Posterior vena cava (tissue), 2 donors: ENCODE measurements at regions of chr15 and their contacts with region 1.

Region 1: DNA sequence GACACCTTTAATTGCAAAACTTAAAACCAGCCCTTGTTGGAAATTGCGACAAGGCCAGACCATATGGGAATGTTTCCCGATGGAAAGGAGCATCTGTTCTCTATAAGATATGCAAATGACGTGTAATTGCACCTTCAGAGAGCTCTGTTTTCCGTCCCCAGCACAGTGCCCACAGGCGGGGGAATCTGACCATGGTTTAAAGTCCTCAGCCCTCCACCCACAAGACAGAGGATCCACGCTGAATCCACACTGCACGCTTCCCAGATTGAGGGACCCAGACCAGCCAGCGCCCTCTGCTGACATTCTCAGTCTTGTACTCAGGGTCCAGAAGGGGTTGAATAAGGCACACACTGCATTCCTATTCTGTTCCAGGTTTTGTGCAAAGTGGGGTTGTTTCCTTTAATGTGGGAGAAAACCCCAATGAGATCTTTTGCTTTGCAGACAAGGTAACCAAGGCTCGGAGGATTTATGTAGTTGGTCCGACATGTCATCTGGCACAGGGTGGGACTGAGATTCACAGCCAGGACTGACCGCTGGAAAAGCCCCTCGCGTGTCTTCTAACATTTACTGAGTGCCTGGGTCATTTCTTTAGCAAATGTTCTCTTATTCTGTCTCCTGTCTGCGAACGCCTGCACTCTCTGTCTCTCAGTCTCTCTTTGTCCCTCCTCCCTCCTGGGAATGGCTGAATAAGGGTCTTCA is 36.8 kb upstream of the KLHL25 start:
- DNase-seq: peak; percentile 87

Region 2: GRCh38 chr15:84924074-84924731 is 907.4 kb before region 1 on chr15:
- intact Hi-C with region 1: no loop called
- DNase-seq: no peak

Region 3: GRCh38 chr15:85296615-85297402 is 534.8 kb before region 1 on chr15:
- intact Hi-C with region 1: loop called in 1 of 2 experiments (anchors 10 kb)
- DNase-seq: no peak

Region 4: DNA sequence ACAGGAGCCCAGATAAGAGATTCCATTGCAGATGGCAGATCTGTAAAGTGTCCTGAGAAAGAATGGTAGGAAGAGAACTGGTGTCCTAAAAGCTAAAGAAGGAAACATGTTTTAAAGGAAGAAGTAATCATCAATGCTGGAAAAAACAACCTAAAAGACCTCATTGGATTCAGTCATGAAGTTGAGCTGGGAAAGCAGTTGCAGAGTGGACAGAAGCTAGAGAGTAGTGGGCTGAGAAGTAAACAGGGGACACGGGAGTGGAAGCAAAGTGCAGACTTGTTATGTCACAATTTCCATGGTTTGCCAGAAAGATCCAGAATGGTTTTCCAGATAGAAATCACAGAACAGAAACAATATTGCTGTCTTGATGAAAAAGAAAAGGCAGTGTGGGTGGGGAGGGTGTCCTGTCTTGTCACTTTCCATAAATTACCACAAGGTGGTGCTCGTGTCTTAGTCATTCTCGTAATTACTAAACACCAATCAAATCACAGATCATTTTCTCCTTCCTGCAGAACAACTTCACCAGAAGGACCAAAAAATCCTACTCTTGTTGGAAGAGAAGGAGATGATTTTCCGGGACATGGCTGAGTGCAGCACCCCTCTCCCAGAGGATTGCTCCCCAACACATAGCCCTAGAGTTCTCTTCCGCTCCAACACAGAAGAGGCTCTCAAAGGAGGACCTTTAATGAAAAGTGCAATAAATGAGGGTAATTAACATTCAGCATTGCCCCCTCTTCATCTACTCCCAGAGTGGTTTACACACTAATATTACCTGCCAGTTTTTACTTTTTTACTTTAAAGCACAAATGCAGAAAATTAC is 101.4 kb before region 1 on chr15:
- intact Hi-C with region 1: loop called in 1 of 2 experiments (anchors 2 kb)
- DNase-seq: no peak

Region 5: DNA sequence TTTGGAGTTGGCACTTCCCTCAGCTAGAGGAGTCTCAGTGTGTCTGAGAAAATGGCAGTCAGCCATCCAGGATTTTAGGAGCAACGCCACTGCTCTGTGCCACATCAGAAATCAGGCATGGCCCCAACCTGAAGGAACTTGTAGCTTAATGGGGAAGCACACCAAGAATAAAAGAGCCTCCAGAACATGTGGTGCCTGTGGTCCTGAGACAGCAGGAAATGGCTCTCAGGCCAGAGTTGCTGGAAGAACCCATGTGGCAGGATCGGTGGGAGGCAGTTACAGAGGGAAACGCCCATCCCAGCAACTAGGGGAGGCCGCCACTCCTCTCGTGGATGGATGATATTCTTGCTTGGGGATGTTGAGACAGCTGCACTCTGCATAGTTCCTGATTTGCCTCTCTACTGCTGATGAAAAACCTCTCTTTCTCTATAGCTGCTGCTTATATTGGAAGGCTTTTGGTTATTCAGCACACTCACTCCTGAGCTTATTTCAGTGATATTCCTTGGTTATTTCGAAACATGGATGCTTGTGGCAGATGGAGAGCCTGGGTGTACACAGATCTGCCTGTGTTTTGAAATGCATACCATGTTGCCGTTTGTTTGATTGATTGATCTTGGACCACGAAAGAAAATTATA is 89.3 kb before region 1 on chr15:
- intact Hi-C with region 1: loop called (anchors 5 kb)
- DNase-seq: peak; percentile 58

Region 6: DNA sequence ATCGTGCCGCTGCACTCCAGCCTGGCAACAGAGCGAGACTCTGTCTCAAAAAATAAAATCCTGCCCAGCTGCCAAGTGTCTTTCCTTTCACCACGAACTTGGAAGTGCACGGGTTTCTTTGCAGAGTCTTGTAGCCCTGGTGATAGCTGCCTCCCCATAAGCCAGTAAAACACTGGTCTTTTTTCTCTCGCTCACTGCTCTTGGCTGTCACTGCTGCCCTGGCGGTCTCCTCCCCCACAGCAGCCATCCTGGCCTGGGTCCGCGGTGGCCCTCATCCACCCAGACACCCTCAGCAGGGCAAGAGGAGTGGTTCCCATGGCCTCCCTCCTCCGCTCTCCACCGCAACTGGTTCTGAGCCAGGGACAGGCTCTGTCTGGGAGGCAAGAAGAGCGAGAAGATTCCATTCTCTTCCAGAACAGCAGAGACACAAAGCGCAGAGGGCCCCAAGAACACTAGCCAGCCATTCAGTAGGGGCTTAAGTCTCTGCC is 81.2 kb before region 1 on chr15:
- intact Hi-C with region 1: loop called in 1 of 2 experiments (anchors 5 kb)
- DNase-seq: peak; percentile 95

Region 7: DNA sequence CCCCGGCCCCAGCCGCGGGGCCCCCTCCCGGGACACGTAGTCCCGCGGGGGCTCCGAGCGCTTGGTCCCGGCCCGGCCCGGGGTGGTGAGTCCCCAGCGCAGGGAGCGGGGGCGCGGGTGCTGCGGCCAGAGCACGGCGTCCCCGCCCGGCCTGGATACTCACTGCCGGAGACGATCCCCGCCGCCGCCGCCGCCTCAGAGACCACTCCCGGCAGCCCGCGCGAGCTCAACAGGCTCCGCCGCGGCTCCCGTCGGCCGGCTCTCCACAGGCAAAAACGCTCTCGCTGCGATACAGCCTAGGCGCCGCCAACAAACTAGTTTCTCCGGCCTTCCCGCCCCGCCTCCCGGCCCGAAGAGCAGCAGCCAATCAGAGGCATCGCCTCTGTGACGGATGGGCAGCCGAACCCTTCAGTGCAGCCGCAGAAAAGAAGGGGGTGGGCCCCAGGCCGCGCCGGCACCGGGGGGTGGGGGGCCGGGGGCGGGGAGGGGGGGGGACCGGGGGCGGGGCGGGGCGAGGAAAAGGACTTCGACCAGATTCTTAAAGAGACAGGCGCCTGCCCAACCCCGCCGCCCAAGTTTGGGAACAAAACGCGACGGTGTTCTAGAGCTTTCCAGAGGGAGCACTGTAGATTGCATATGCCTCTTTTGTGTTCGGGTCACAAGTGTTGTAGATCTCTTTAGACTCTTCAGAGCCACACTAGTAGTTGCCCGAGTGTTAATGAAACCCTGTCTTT is 36.8 kb before region 1 on chr15 and contains the start of gene KLHL25:
- intact Hi-C with region 1: loop called in 1 of 2 experiments (anchors 5 kb)
- DNase-seq: peak; percentile 98
- total RNA-seq, gene KLHL25: 10.0 to 10.3 TPM

Region 8: GRCh38 chr15:87118435-87118834 is 1286.9 kb after region 1 on chr15:
- intact Hi-C with region 1: no loop called
- DNase-seq: no peak